MCF 10A (cell line): ENCODE measurements at regions of chr7 and their contacts with region 1.

Region 1: DNA sequence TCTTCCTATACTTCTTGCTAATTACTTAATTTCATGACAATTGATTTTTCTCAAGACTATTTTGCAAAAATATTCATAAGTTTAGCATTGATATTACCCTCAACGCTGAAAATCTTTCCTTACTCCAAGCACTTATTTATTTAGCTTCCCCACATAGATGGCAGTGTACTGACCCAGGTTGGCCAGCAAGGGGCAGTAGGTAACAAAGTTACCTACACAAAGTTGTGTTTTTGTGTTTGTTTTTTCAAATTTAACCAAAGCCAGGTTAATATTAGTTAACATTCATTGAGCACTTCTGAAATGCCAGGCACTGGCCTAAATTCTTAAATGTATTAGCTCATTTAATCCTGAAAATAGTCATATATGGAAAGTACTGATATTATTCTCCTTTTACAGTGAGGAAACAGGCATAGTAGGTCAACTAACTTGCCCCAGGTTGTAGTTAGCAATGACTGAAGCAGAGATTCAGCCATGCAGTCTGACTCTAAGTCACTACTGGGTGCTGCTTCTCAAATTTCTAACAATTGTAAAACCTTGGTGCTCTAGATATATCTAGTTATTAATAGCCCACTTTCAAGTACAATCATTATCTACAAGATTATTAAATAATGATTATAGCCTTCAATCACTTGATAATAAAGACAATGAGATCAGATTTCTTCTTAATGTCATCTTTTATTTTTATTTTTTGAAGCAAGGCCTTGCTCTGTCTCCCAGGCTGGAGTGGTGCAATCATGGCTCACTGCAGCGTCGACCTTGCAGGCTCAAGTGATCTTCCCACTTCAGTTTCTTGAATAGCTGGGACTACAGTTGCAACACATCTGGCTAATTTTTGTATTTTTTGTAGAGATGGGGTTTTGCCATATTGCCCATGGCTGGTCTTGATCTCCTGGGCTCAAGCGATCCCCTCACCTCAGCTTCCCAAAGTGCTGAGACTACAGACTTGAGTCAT is 5.8 kb upstream of the GGCT start:
- DNase-seq: peak; percentile 58
- H3K4me3 Mint-ChIP-seq: no peak overlapping the region
- H3K27ac Mint-ChIP-seq: no peak overlapping the region
- H3K4me1 Mint-ChIP-seq: no peaks in the 10 kb centered on the region
- H3K27me3 Mint-ChIP-seq: no peaks in the 10 kb centered on the region
- CTCF ChIP-seq: peak; percentile 86

Region 2: DNA sequence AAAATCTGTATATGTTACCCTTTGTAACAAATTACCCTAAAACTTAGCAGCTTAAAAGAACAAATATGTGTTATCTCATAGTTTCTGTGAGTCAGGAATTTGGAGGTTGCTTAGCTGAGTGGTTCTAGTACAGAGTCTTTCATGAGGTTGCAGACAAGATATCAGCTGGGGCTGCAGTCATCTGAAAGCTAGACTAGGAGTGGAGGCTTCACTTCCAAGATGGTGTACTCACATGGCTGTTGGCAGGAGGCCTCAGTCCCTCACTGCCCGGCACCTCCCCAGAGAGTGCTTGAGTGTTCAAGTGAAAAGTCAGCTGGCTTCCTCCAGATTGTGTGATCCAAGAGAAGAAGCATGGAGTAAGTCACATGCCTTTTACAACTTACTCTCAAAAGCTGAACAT is 11.1 kb after region 1 on chr7:
- CTCF ChIA-PET with region 1: interaction called, 17 read pairs
- POLR2A ChIA-PET with region 1: interaction called, 4 read pairs
- intact Hi-C with region 1: no loop called
- DNase-seq: no peak
- H3K4me3 Mint-ChIP-seq: no peak overlapping the region
- H3K27ac Mint-ChIP-seq: no peak overlapping the region
- H3K4me1 Mint-ChIP-seq: peaks cover 12% of the 10 kb centered on the region
- H3K27me3 Mint-ChIP-seq: no peaks in the 10 kb centered on the region
- CTCF ChIP-seq: no peak

Region 3: DNA sequence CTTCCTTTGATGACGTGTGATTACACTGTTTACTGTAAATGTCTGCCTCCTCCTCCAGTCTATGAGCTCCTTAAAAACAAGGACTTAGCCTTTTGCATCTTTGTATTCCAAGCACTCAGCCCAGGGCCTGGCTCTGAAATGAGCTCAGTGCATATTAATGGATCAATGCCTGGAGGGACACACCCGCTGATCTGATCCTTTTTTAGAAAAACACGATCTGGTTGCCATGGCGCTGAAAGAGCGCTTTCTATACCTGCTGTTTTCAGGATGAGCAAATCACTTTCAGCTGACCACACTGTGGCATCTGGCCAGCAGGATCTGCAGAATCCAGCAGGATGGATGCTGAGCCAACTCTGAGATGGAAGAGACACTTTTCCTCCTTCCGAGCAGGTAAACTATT is 46.4 kb after region 1 on chr7:
- CTCF ChIA-PET with region 1: interaction called, 150 read pairs
- POLR2A ChIA-PET with region 1: interaction called, 3 read pairs
- intact Hi-C with region 1: no loop called
- DNase-seq: peak; percentile 86
- H3K4me3 Mint-ChIP-seq: no peak overlapping the region
- H3K27ac Mint-ChIP-seq: no peak overlapping the region
- H3K4me1 Mint-ChIP-seq: peaks cover 3% of the 10 kb centered on the region
- H3K27me3 Mint-ChIP-seq: no peaks in the 10 kb centered on the region
- CTCF ChIP-seq: no peak